CD4-positive, alpha-beta T cell (primary cell): ENCODE measurements at regions of chr1 and their contacts with region 1.

Region 1: DNA sequence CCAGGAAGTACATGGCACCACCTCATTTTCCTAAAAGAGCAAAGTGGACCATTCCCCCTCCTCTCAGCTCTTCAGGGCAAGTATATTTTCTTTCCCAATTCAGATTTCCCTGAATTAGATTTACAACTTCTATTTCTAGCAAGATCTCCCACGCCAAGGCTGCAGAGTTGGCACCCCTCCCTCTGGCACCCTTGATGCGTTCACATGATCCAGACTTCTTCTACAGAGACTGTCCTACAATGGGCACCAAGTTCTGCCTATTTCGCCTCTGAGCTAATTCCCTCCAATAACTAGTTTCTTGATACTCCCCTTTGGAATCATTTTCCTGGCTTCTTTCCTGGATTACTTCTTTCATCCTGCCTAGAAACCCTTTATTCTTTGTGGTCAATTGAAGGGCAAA is 122.0 kb downstream of the CDC7 start:
- DNase-seq: no peak
- ATAC-seq: no peak
- H3K4me3 ChIP-seq: no peak overlapping the region
- H3K4me3 Mint-ChIP-seq: no peak overlapping the region
- H3K27ac ChIP-seq: no peak overlapping the region
- H3K27ac Mint-ChIP-seq: no peak overlapping the region
- H3K4me1 ChIP-seq: no peaks in the 10 kb centered on the region
- H3K4me1 Mint-ChIP-seq: no peaks in the 10 kb centered on the region
- H3K27me3 ChIP-seq: no peaks in the 10 kb centered on the region
- H3K27me3 Mint-ChIP-seq: no peaks in the 10 kb centered on the region
- CTCF ChIP-seq: no peak

Region 2: GRCh38 chr1:91555821-91556531 is 66.6 kb before region 1 on chr1:
- CTCF ChIA-PET with region 1: no interaction called
- POLR2A ChIA-PET with region 1: no interaction called
- intact Hi-C with region 1: loop called in 1 of 2 experiments (anchors 10 kb)
- DNase-seq: peak in 13 of 14 experiments; percentile 29 to 92 (median 46)
- ATAC-seq: peak; percentile 87
- H3K4me3 ChIP-seq: no peak overlapping the region
- H3K4me3 Mint-ChIP-seq: peak overlapping the region; percentile 2
- H3K27ac ChIP-seq: peak overlapping the region; percentile 33 to 83
- H3K27ac Mint-ChIP-seq: peak overlapping the region; percentile 90
- H3K4me1 ChIP-seq: peaks cover 66% of the 10 kb centered on the region
- H3K4me1 Mint-ChIP-seq: peaks cover 86% of the 10 kb centered on the region
- H3K27me3 ChIP-seq: no peaks in the 10 kb centered on the region
- H3K27me3 Mint-ChIP-seq: no peaks in the 10 kb centered on the region
- CTCF ChIP-seq: no peak

Region 3: GRCh38 chr1:91689641-91690481 is 67.2 kb after region 1 on chr1:
- CTCF ChIA-PET with region 1: no interaction called
- POLR2A ChIA-PET with region 1: no interaction called
- intact Hi-C with region 1: loop called in 1 of 2 experiments (anchors 2 kb)
- DNase-seq: no peak
- ATAC-seq: no peak
- H3K4me3 ChIP-seq: no peak overlapping the region
- H3K4me3 Mint-ChIP-seq: no peak overlapping the region
- H3K27ac ChIP-seq: no peak overlapping the region
- H3K27ac Mint-ChIP-seq: no peak overlapping the region
- H3K4me1 ChIP-seq: peaks cover 7% of the 10 kb centered on the region
- H3K4me1 Mint-ChIP-seq: peaks cover 15% of the 10 kb centered on the region
- H3K27me3 ChIP-seq: no peaks in the 10 kb centered on the region
- H3K27me3 Mint-ChIP-seq: no peaks in the 10 kb centered on the region
- CTCF ChIP-seq: no peak